Activated CD8-positive, alpha-beta T cell treated with anti-CD3 and anti-CD28 coated beads, Interleukin-2, amount 10 ng/mL, durations not matched to agents 7 days and 5 days (primary cell): ENCODE measurements at regions of chr1 and their contacts with region 1.

Region 1: GRCh38 chr1:203340112-203340804 is 10.7 kb downstream of the FMOD start:
- DNase-seq: peak; percentile 75
- ATAC-seq: peak; percentile 88
- H3K4me3 Mint-ChIP-seq: no peak overlapping the region
- H3K27ac Mint-ChIP-seq: no peak overlapping the region
- H3K4me1 Mint-ChIP-seq: peaks cover 18% of the 10 kb centered on the region
- H3K27me3 Mint-ChIP-seq: peaks cover 30% of the 10 kb centered on the region

Region 2: DNA sequence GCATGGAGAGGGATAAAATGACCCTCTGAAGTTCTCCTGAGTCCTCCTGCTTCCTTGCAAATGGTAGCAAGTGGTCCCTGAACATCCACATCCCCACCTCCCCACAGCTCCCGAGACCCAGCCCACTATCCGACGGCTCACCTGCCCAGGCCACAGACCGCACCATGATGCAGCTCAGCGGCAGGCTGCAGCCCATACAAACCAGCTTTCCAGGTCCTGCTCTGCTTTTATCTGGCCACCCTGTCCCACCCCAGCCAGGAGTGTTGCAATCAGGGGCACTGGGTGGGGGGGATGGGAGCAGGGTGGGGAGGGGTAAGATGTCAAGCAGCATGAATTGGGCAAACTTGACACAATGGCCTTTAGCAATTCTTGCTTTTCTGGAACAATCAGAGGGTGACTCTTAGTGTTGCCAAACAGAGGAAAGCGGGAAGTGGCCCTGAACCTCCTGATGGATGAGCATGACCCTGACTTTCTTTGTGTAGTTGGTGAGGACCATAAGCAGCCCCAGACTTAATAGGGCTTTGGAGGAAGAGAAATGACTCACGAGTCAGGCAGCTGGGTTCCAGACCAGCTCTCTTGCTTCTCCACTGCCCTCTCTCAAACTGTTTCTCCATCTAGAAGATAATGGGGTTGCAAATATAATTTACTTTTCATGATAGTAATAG is 110.7 kb before region 1 on chr1 and contains the start of gene CHIT1:
- CTCF ChIA-PET with region 1: no interaction called
- POLR2A ChIA-PET with region 1: no interaction called
- DNase-seq: no peak
- ATAC-seq: no peak
- H3K4me3 Mint-ChIP-seq: no peak within 1 kb of the TSS
- H3K27ac Mint-ChIP-seq: no peak within 1 kb of the TSS
- H3K4me1 Mint-ChIP-seq: no peaks in the 10 kb centered on the region
- H3K27me3 Mint-ChIP-seq: peaks cover 15% of the 10 kb centered on the region
- total RNA-seq, gene CHIT1: 0.39 to 0.50 TPM

Region 3: GRCh38 chr1:203290261-203291089 is 49.8 kb before region 1 on chr1:
- CTCF ChIA-PET with region 1: interaction called, 14 read pairs
- POLR2A ChIA-PET with region 1: interaction called, 6 read pairs
- DNase-seq: peak; percentile 97
- ATAC-seq: peak; percentile 51
- H3K4me3 Mint-ChIP-seq: peak overlapping the region; percentile 81
- H3K27ac Mint-ChIP-seq: peak overlapping the region; percentile 99
- H3K4me1 Mint-ChIP-seq: peaks cover 86% of the 10 kb centered on the region
- H3K27me3 Mint-ChIP-seq: no peaks in the 10 kb centered on the region

Region 4: GRCh38 chr1:203320591-203321272 is 19.5 kb before region 1 on chr1:
- CTCF ChIA-PET with region 1: interaction called, 145 read pairs
- POLR2A ChIA-PET with region 1: interaction called, 5 read pairs
- DNase-seq: peak; percentile 86
- ATAC-seq: peak; percentile 81
- H3K4me3 Mint-ChIP-seq: peak overlapping the region; percentile 61
- H3K27ac Mint-ChIP-seq: peak overlapping the region; percentile 90
- H3K4me1 Mint-ChIP-seq: peaks cover 62% of the 10 kb centered on the region
- H3K27me3 Mint-ChIP-seq: peaks cover 3% of the 10 kb centered on the region

Region 5: GRCh38 chr1:203351037-203352013 is 11.1 kb after region 1 on chr1 and contains the start of gene FMOD:
- CTCF ChIA-PET with region 1: interaction called, 20 read pairs
- POLR2A ChIA-PET with region 1: no interaction called
- DNase-seq: no peak
- ATAC-seq: peak; percentile 56
- H3K4me3 Mint-ChIP-seq: no peak within 1 kb of the TSS
- H3K27ac Mint-ChIP-seq: no peak within 1 kb of the TSS
- H3K4me1 Mint-ChIP-seq: peaks cover 6% of the 10 kb centered on the region
- H3K27me3 Mint-ChIP-seq: peaks cover 28% of the 10 kb centered on the region
- total RNA-seq, gene FMOD: not detected

Region 6: GRCh38 chr1:203486618-203487370 is 146.5 kb after region 1 on chr1:
- CTCF ChIA-PET with region 1: interaction called, 176 read pairs
- POLR2A ChIA-PET with region 1: no interaction called
- DNase-seq: no peak
- ATAC-seq: no peak
- H3K4me3 Mint-ChIP-seq: peak overlapping the region; percentile 61
- H3K27ac Mint-ChIP-seq: peak overlapping the region; percentile 31
- H3K4me1 Mint-ChIP-seq: no peaks in the 10 kb centered on the region
- H3K27me3 Mint-ChIP-seq: no peaks in the 10 kb centered on the region